ENCODE measurements at regions of chr15 and their contacts with region 1.

Region 1: GRCh38 chr15:29903785-29904464 is 81.7 kb upstream of the TJP1 start:
- DNase-seq: no peak

Region 2: DNA sequence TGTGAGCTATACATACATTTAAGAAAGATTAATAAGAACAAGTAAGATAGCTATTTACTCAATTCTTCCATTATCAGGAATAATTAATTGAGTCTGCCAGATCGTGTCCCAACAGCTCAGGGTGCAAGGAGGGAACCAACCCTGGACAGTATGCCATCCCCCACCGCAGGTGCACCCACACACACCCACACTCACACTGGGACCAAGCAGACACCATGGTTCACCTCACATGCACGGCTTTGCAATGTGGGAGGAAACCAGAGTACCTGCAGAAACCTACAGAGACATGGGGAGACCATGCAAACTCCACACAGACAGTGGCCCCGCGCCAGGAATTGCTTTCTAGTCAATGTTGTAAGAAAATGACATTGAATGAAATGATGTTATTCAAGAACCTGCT is 61.6 kb before region 1 on chr15:
- intact Hi-C with region 1: loop called in 1 of 2 experiments (anchors 2 kb)
- DNase-seq: no peak

Region 3: DNA sequence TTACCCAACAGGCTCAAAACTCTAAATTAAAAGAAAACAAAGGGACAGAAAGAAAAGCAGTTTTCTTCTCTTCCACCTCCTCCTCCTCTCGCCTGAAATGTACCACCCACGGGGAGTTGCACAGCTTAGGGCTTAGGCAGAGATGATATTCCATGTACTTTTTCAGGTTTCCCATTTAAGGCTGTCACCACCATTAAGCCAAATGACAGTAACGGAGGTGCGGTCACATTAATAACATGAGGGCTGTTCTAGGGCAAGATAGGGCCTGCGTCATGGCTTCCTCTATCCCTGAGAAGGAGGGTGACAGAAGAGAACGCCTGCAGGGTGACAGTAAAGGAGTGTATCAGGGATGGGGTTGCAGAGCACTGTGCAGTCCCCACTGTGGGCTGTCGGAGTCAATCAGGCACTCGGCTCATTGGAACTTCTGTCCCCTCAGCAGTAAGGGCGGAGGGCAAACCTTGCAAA is 29.9 kb before region 1 on chr15:
- intact Hi-C with region 1: loop called in 1 of 2 experiments (anchors 2 kb)
- DNase-seq: no peak